Activated B cell treated with CpG ODN at 0.5 μM for 24 hours (primary cell): ENCODE measurements at regions of chr11 and their contacts with region 1.

Region 1: GRCh38 chr11:67391304-67392132 is at the start of gene RAD9A:
- DNase-seq: peak; percentile 85
- ATAC-seq: peak; percentile 79
- H3K4me3 Mint-ChIP-seq: peak within 1 kb of the TSS; percentile 89
- H3K27ac Mint-ChIP-seq: peak within 1 kb of the TSS; percentile 80
- H3K4me1 Mint-ChIP-seq: peaks cover 40% of the 10 kb centered on the region
- H3K27me3 Mint-ChIP-seq: no peaks in the 10 kb centered on the region
- CTCF ChIP-seq: no peak
- total RNA-seq, gene RAD9A: 30.4 and 35.2 TPM in 2 replicates

Region 2: GRCh38 chr11:67099831-67100324 is 291.6 kb before region 1 on chr11:
- CTCF ChIA-PET with region 1: no interaction called
- POLR2A ChIA-PET with region 1: no interaction called
- intact Hi-C with region 1: no loop called
- DNase-seq: no peak
- ATAC-seq: peak; percentile 68
- H3K4me3 Mint-ChIP-seq: no peak overlapping the region
- H3K27ac Mint-ChIP-seq: peak overlapping the region; percentile 65
- H3K4me1 Mint-ChIP-seq: peaks cover 13% of the 10 kb centered on the region
- H3K27me3 Mint-ChIP-seq: no peaks in the 10 kb centered on the region
- CTCF ChIP-seq: no peak

Region 3: GRCh38 chr11:67373925-67374618 is 17.4 kb before region 1 on chr11:
- CTCF ChIA-PET with region 1: interaction called, 4 read pairs
- POLR2A ChIA-PET with region 1: interaction called, 1,307 read pairs
- intact Hi-C with region 1: no loop called
- DNase-seq: peak; percentile 63
- ATAC-seq: peak; percentile 47
- H3K4me3 Mint-ChIP-seq: peak overlapping the region; percentile 87
- H3K27ac Mint-ChIP-seq: peak overlapping the region; percentile 79
- H3K4me1 Mint-ChIP-seq: peaks cover 57% of the 10 kb centered on the region
- H3K27me3 Mint-ChIP-seq: no peaks in the 10 kb centered on the region
- CTCF ChIP-seq: no peak

Region 4: GRCh38 chr11:67420646-67421420 is 29.3 kb after region 1 on chr11:
- CTCF ChIA-PET with region 1: no interaction called
- POLR2A ChIA-PET with region 1: interaction called, 693 read pairs
- intact Hi-C with region 1: no loop called
- DNase-seq: peak; percentile 98
- ATAC-seq: peak; percentile 85
- H3K4me3 Mint-ChIP-seq: peak overlapping the region; percentile 79
- H3K27ac Mint-ChIP-seq: peak overlapping the region; percentile 83
- H3K4me1 Mint-ChIP-seq: peaks cover 52% of the 10 kb centered on the region
- H3K27me3 Mint-ChIP-seq: no peaks in the 10 kb centered on the region
- CTCF ChIP-seq: no peak

Region 5: DNA sequence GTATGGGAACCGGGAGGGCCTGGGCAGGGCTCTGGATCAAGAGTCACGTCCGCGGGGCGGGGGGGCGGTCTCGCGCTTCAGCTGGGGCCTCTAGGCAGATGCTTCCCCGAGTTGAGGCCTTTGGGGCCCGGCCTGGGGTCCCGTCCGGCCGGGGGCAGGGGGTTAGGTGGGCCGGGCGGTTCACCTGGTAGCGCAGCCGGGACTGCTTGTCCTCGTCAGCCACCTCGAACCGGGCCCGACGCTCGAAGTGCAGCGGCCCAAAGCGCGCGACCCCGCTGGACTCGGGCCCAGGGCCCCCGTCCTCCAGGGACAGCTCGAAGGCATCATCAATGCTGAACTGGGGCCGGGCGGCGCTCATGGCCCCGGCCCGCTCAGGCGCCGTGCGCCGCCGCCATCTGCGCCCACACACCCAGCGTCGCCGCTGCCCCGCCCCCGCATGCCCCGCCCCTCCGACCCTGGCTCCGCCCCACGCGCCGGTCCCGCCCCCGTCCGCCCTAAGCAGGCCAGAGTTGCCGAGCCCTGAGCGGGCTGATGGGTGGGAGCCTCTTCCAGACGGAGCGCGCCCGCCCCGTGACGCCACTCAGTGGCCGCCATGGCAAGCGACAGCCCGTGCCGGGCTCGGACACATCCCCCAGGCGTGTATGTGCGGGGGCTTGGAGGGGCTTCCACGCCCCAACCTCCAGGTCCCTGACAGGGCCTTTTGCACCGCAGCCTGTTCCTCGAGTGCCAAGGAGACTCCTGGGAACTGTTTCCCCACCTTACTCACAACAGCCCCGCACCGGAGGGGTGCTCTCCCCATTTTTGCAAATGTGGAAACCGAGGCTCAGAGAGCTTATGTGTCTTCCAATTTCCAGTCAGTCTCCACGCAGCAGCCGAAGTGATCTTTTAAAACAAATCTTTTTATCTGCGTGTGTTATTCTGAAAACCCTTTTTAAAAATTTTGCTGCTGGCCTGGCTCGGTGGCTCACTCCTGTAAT is 77.6 kb after region 1 on chr11 and contains the start of gene TMEM134:
- CTCF ChIA-PET with region 1: interaction called, 3 read pairs
- POLR2A ChIA-PET with region 1: interaction called, 24 read pairs
- intact Hi-C with region 1: loop called (anchors 1 kb)
- DNase-seq: peak; percentile 88
- ATAC-seq: peak; percentile 73
- H3K4me3 Mint-ChIP-seq: peak within 1 kb of the TSS; percentile 89
- H3K27ac Mint-ChIP-seq: peak within 1 kb of the TSS; percentile 91
- H3K4me1 Mint-ChIP-seq: peaks cover 49% of the 10 kb centered on the region
- H3K27me3 Mint-ChIP-seq: no peaks in the 10 kb centered on the region
- CTCF ChIP-seq: no peak
- total RNA-seq, gene TMEM134: 76.0 and 83.5 TPM in 2 replicates

Region 6: GRCh38 chr11:67656278-67656922 is 264.9 kb after region 1 on chr11:
- CTCF ChIA-PET with region 1: no interaction called
- POLR2A ChIA-PET with region 1: no interaction called
- intact Hi-C with region 1: loop called (anchors 2 kb)
- DNase-seq: no peak
- ATAC-seq: peak; percentile 43
- H3K4me3 Mint-ChIP-seq: no peak overlapping the region
- H3K27ac Mint-ChIP-seq: no peak overlapping the region
- H3K4me1 Mint-ChIP-seq: peaks cover 8% of the 10 kb centered on the region
- H3K27me3 Mint-ChIP-seq: no peaks in the 10 kb centered on the region
- CTCF ChIP-seq: no peak

Region 7: GRCh38 chr11:69186312-69187260 is 1795.1 kb after region 1 on chr11:
- CTCF ChIA-PET with region 1: no interaction called
- POLR2A ChIA-PET with region 1: no interaction called
- intact Hi-C with region 1: no loop called
- DNase-seq: no peak
- ATAC-seq: no peak
- H3K4me3 Mint-ChIP-seq: no peak overlapping the region
- H3K27ac Mint-ChIP-seq: no peak overlapping the region
- H3K4me1 Mint-ChIP-seq: no peaks in the 10 kb centered on the region
- H3K27me3 Mint-ChIP-seq: peaks cover 2% of the 10 kb centered on the region
- CTCF ChIP-seq: no peak